ENCODE measurements at regions of chr2 and their contacts with region 1.

Region 1: GRCh38 chr2:7097348-7097895 is 180.2 kb downstream of the RNF144A start:
- DNase-seq: peak; percentile 41
- ATAC-seq: peak; percentile 96
- H3K4me3 ChIP-seq: peak overlapping the region in 1 of 3 experiments; percentile 25; a peak in 2 of 6 replicates
- H3K27ac ChIP-seq: no peak overlapping the region
- H3K4me1 ChIP-seq: peaks cover 5% of the 10 kb centered on the region
- H3K27me3 ChIP-seq: no peaks in the 10 kb centered on the region
- CTCF ChIP-seq: peak; percentile 98
- EP300 ChIP-seq: no peak
- POLR2A ChIP-seq: no peak
- RAD21 ChIP-seq: peak; percentile 90

Region 2: DNA sequence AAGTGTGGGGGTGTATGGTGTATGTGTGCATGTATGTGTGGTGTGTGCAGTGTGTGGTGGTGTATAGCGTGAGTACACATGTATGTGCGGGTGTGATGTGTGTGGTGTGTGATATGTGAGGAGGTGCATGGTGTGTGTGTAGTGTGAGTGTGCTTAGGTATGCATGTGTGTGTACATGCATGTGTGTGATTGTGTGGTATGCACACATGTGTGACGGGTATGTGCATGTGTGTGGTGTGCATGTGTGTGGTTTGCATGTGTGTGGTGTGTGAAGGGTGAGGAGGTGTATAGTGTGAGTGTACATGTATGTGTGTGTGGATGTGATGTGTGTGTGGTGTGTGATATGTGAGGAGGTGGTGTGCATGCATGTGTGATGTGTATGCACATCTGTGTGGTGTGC is 337.3 kb before region 1 on chr2:
- CTCF ChIA-PET with region 1: no interaction called
- POLR2A ChIA-PET with region 1: no interaction called
- in situ Hi-C with region 1: no loop called
- intact Hi-C with region 1: no loop called
- DNase-seq: no peak
- ATAC-seq: no peak
- H3K4me3 ChIP-seq: no peak overlapping the region
- H3K27ac ChIP-seq: no peak overlapping the region
- H3K4me1 ChIP-seq: no peaks in the 10 kb centered on the region
- H3K27me3 ChIP-seq: peaks cover 0 to 34% of the 10 kb centered on the region in 2 experiments; a peak in 2 of 5 replicates
- CTCF ChIP-seq: no peak
- EP300 ChIP-seq: no peak
- POLR2A ChIP-seq: no peak
- RAD21 ChIP-seq: no peak

Region 3: DNA sequence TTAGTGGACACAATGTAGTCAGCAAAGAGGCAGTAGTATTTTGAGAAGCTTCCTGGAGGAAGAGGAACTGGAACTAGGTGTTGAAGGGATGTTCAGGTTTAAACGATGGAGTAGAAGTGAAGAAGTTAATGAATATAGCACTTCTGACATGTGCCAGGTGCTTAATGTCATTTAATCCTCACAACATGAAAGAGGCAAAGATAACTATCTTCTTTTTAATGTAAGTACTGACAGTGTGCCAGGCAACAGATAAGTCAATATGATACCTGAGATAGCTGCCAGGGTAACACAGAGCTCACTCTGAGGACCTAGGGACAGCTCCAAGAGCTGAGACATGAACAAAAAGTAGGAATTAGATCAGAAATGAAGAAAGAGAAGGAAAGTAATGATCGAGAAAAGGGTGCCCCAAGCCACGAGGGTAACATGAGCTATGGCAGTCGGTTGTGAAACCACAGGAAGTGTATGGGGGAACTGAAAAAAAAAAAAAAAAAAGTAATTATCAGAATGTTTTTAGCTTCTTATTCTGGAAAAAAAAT is 39.5 kb before region 1 on chr2:
- CTCF ChIA-PET with region 1: no interaction called
- POLR2A ChIA-PET with region 1: no interaction called
- in situ Hi-C with region 1: no loop called
- intact Hi-C with region 1: no loop called
- DNase-seq: no peak
- ATAC-seq: no peak
- H3K4me3 ChIP-seq: no peak overlapping the region
- H3K27ac ChIP-seq: no peak overlapping the region
- H3K4me1 ChIP-seq: no peaks in the 10 kb centered on the region
- H3K27me3 ChIP-seq: no peaks in the 10 kb centered on the region
- CTCF ChIP-seq: no peak
- EP300 ChIP-seq: no peak
- POLR2A ChIP-seq: no peak
- RAD21 ChIP-seq: no peak

Region 4: DNA sequence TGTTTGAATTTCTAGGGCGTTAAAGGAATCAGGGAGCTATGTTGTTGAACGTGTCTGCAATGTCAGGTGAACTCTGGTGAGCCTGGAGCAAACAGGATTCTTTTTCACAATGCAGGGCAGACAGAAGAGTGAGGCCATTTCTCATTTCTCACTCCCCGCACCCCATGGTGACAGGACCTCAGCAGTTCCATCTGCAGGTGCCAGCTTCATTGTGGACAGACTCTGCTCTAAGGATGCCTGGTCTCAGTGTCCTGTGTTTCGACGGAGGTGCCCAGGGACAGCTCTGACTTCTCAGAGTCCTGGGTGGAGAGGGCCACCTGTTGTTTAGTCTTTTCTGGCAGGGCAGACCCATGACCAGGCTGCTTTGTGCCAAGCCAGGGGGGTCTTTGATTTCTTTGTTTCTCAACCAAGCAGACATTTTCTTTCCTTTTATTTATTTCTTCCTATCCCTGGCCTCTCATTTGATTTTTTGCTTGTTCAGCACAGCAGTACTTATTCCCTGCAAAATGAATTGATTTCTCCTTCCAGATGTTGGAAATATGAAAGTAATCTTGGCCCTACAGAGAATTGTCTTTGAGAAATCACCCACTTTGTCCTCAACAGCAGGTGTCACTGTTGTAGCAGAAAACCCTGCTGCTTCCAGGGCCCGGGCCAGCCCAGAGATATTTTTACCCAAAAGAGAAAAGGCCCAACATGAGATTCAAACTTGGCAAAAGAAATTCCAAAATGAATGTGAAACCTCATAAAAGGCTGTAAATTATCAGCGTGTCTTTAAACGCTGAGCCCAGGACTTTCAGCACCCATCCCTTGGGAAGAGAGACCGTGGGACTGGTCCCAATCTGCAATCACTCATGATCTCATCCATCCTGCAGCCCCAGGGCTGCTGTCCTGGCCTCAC is 21.4 kb after region 1 on chr2:
- CTCF ChIA-PET with region 1: no interaction called
- POLR2A ChIA-PET with region 1: no interaction called
- in situ Hi-C with region 1: no loop called
- intact Hi-C with region 1: loop called (anchors 2 kb)
- DNase-seq: no peak
- ATAC-seq: peak; percentile 87
- H3K4me3 ChIP-seq: no peak overlapping the region
- H3K27ac ChIP-seq: no peak overlapping the region
- H3K4me1 ChIP-seq: no peaks in the 10 kb centered on the region
- H3K27me3 ChIP-seq: no peaks in the 10 kb centered on the region
- CTCF ChIP-seq: peak; percentile 65
- EP300 ChIP-seq: no peak
- POLR2A ChIP-seq: no peak
- RAD21 ChIP-seq: peak; percentile 10; the same call in 1 of the 2 replicates

Region 5: DNA sequence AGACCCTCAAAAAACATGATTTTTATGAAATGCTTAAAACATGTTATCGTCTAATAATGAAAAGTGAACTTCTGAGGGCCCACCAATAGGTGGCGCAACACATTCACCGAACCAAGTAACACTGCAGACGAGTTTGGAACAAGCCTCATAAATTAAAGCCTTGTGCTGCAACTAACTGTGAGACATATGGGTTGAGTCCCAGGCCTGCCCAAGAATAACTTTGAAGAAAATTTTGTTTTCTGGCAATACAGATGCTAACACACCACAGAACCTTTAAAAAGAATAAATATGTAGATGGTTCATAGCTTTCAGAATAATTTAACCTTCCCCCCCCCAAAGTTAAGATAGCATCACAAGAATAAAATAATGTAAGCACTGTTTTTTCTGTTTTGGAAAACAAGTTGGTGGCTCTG is 105.6 kb after region 1 on chr2:
- CTCF ChIA-PET with region 1: no interaction called
- POLR2A ChIA-PET with region 1: no interaction called
- in situ Hi-C with region 1: no loop called
- intact Hi-C with region 1: loop called (anchors 1 kb)
- DNase-seq: peak; percentile 49
- ATAC-seq: peak; percentile 77
- H3K4me3 ChIP-seq: no peak overlapping the region
- H3K27ac ChIP-seq: no peak overlapping the region
- H3K4me1 ChIP-seq: no peaks in the 10 kb centered on the region
- H3K27me3 ChIP-seq: no peaks in the 10 kb centered on the region
- CTCF ChIP-seq: peak; percentile 85
- EP300 ChIP-seq: no peak
- POLR2A ChIP-seq: no peak
- RAD21 ChIP-seq: no peak

Region 6: GRCh38 chr2:7373156-7373555 is 275.7 kb after region 1 on chr2:
- CTCF ChIA-PET with region 1: no interaction called
- POLR2A ChIA-PET with region 1: no interaction called
- in situ Hi-C with region 1: no loop called
- intact Hi-C with region 1: no loop called
- DNase-seq: no peak
- ATAC-seq: no peak
- H3K4me3 ChIP-seq: no peak overlapping the region
- H3K27ac ChIP-seq: no peak overlapping the region
- H3K4me1 ChIP-seq: no peaks in the 10 kb centered on the region
- H3K27me3 ChIP-seq: peaks cover 0 to 3% of the 10 kb centered on the region in 2 experiments; a peak in 1 of 5 replicates
- CTCF ChIP-seq: no peak
- EP300 ChIP-seq: no peak
- POLR2A ChIP-seq: no peak
- RAD21 ChIP-seq: no peak

Region 7: GRCh38 chr2:7672027-7672684 is 574.7 kb after region 1 on chr2:
- CTCF ChIA-PET with region 1: interaction called, 17 read pairs
- POLR2A ChIA-PET with region 1: no interaction called
- in situ Hi-C with region 1: loop called (anchors 25 kb)
- intact Hi-C with region 1: loop called (anchors 1 kb)
- DNase-seq: peak; percentile 49
- ATAC-seq: peak; percentile 83
- H3K4me3 ChIP-seq: no peak overlapping the region
- H3K27ac ChIP-seq: no peak overlapping the region
- H3K4me1 ChIP-seq: no peaks in the 10 kb centered on the region
- H3K27me3 ChIP-seq: peaks cover 0 to 5% of the 10 kb centered on the region in 2 experiments; a peak in 1 of 5 replicates
- CTCF ChIP-seq: peak; percentile 85
- EP300 ChIP-seq: no peak
- POLR2A ChIP-seq: no peak
- RAD21 ChIP-seq: peak; percentile 60